ENCODE measurements at regions of chr22 and their contacts with region 1.

Region 1: GRCh38 chr22:21867528-21868266 is at the start of gene MAPK1:
- DNase-seq: peak; percentile 90 to 95 (median 93)
- H3K4me3 ChIP-seq: peak within 1 kb of the TSS; percentile 11 to 97 (median 54)
- H3K27ac ChIP-seq: peak within 1 kb of the TSS in 4 of 5 donors; percentile 81 to 97 (median 84)
- H3K4me1 ChIP-seq: peaks cover 0 to 46% of the 10 kb centered on the region in 2 donors
- H3K27me3 ChIP-seq: no peaks in the 10 kb centered on the region
- CTCF ChIP-seq: peak in 5 of 6 experiments; percentile 12 to 48 (median 34)
- POLR2A ChIP-seq: peak; percentile 68 to 86
- total RNA-seq, gene MAPK1: 63.3 to 201 (median 109) TPM

Region 2: GRCh38 chr22:21807544-21808529 is 59.9 kb before region 1 on chr22:
- intact Hi-C with region 1: loop called in 1 of 2 experiments (anchors 10 kb)
- DNase-seq: no peak
- H3K4me3 ChIP-seq: no peak overlapping the region
- H3K27ac ChIP-seq: no peak overlapping the region
- H3K4me1 ChIP-seq: peaks cover 0 to 16% of the 10 kb centered on the region in 2 donors
- H3K27me3 ChIP-seq: no peaks in the 10 kb centered on the region
- CTCF ChIP-seq: no peak
- POLR2A ChIP-seq: no peak

Region 3: DNA sequence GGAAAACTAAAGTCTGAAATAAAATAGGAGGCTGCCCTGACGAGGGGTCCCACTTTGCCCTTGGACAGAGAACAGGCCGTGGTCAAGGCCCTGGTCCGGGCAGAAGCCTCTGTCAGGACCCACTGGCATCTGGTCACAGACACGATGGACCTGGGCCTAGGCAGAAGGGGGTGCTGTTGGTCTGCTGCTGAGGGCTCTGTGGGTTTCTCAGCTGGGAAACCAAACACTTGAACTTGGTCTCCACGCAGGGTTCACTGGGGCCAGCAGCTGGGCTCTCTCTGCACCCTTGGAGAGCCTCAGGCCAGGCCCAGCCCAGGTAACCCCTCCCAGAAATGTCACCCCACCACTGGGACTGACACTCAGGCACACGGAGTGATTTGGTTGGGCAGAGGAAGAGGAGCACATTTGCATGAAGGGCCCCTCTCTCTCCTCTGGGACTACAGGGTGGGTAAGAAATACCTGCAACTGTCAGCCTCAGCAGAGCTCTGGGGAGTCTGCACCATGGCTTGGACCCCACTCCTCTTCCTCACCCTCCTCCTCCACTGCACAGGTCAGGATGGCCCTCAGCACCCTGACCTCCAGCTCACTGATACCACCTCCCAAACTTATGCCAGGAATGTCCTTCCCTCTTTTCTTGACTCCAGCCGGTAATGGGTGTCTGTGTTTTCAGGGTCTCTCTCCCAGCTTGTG is 162.9 kb after region 1 on chr22:
- intact Hi-C with region 1: no loop called
- DNase-seq: peak in 1 of 7 donors; percentile 24
- H3K4me3 ChIP-seq: no peak overlapping the region
- H3K27ac ChIP-seq: peak overlapping the region in 1 of 5 donors; percentile 34
- H3K4me1 ChIP-seq: no peaks in the 10 kb centered on the region
- H3K27me3 ChIP-seq: no peaks in the 10 kb centered on the region
- CTCF ChIP-seq: peak in 1 of 6 experiments; percentile 33
- POLR2A ChIP-seq: no peak